Activated T-helper 2 cell treated with anti-CD3 and anti-CD28 coated beads, Interferon-gamma antibody, Interleukin-2, Interleukin-4, amounts not matched to agents 10 μg/mL and 5 μg/mL and 100 μg/mL, durations not matched to agents 14 hours and 24 hours and 36 hours (primary cell): ENCODE measurements at regions of chr3 and their contacts with region 1.

Region 1: DNA sequence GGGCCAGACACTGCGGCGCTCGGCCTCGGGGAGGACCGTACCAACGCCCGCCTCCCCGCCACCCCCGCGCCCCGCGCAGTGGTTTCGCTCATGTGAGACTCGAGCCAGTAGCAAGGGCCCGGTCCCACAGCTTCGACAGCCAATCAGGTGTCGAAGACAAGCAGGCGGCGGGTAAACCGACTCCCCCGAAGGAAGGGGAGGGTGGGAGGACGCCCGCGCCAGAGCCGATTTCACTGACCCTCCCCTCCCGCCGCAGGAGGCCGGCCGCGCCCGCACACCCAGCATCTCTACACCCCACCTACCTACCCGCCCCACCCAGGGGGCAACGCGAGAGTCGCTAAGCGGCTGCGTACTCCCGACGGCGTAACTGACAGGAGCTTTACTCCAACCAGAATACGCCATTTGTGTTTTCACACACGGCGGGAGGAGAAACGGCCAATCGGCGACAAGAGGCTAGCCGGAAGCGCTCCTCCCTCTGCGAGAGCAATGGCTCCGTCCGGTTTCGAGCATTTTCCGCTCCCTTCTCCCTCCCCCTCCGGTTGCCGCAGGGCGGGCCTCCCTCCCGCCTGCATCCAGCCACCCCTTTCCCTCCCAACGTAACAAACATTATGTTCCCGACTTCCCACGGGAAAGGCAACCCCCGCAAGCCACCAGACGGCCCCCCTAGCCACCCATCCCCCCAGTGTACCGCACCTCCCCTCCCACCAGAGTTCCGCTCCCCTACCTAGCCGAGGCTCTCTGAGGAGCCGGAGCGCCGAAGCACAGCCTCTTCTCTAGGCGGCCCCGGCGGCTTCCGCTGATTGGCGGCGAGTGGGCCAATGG is 504 bp upstream of the SETD5 start:
- DNase-seq: peak; percentile 99
- H3K4me3 Mint-ChIP-seq: peak overlapping the region; percentile 96
- H3K27ac Mint-ChIP-seq: peak overlapping the region; percentile 99
- H3K4me1 Mint-ChIP-seq: peaks cover 56% of the 10 kb centered on the region
- H3K27me3 Mint-ChIP-seq: no peaks in the 10 kb centered on the region

Region 2: GRCh38 chr3:9276761-9277370 is 120.0 kb before region 1 on chr3:
- intact Hi-C with region 1: no loop called
- DNase-seq: no peak
- H3K4me3 Mint-ChIP-seq: no peak overlapping the region
- H3K27ac Mint-ChIP-seq: no peak overlapping the region
- H3K4me1 Mint-ChIP-seq: no peaks in the 10 kb centered on the region
- H3K27me3 Mint-ChIP-seq: peaks cover 4% of the 10 kb centered on the region

Region 3: GRCh38 chr3:9362731-9363530 is 34.0 kb before region 1 on chr3 and contains the start of gene THUMPD3:
- intact Hi-C with region 1: loop called (anchors 1 kb)
- DNase-seq: peak; percentile 89
- H3K4me3 Mint-ChIP-seq: peak within 1 kb of the TSS; percentile 98
- H3K27ac Mint-ChIP-seq: peak within 1 kb of the TSS; percentile 99
- H3K4me1 Mint-ChIP-seq: peaks cover 19% of the 10 kb centered on the region
- H3K27me3 Mint-ChIP-seq: no peaks in the 10 kb centered on the region
- total RNA-seq, gene THUMPD3: 56.5 and 57.7 TPM in 2 replicates

Region 4: GRCh38 chr3:9439331-9439730 is 42.4 kb after region 1 on chr3:
- intact Hi-C with region 1: no loop called
- DNase-seq: no peak
- H3K4me3 Mint-ChIP-seq: no peak overlapping the region
- H3K27ac Mint-ChIP-seq: no peak overlapping the region
- H3K4me1 Mint-ChIP-seq: peaks cover 5% of the 10 kb centered on the region
- H3K27me3 Mint-ChIP-seq: no peaks in the 10 kb centered on the region

Region 5: GRCh38 chr3:9452417-9452816 is 55.5 kb after region 1 on chr3:
- intact Hi-C with region 1: loop called (anchors 2 kb)
- DNase-seq: no peak
- H3K4me3 Mint-ChIP-seq: peak overlapping the region; percentile 11
- H3K27ac Mint-ChIP-seq: peak overlapping the region; percentile 75
- H3K4me1 Mint-ChIP-seq: peaks cover 33% of the 10 kb centered on the region
- H3K27me3 Mint-ChIP-seq: no peaks in the 10 kb centered on the region

Region 6: DNA sequence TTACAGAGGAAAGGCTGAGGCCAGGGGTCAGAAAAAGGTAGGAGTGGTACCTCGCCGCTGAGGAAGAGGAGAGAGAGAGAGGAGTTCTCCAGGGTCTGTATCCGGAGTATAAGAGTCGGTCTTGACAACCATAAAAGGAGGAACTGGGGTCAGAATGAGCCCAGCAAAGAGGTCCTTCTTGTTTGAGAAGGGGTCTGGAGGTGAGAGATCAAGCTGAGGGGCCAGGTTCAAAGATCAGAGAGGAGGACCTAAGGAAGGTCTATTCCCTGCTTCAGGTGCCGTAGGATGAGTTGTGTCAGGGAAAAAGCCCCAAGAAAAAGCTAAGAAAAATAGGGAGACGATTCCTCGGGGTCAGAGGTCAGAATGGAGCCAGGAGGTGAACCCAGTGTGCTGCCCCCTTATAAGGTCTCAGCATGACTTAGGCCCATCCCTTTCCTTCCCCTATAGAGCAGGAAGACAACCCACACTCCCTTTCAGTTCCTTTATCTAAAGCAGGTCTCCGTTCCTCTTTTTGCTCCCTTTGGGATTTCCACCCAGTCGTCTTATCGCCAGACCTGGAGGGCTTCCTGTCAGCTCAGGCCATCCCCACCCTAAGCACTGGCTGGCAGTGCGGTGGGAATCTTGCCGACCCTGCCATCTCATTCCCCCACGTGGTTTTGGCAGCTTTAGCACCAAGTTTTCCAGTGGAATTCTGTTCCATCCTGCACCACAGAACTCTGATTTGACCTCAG is 253.0 kb after region 1 on chr3:
- intact Hi-C with region 1: loop called (anchors 1 kb)
- DNase-seq: no peak
- H3K4me3 Mint-ChIP-seq: peak overlapping the region; percentile 93
- H3K27ac Mint-ChIP-seq: peak overlapping the region; percentile 84
- H3K4me1 Mint-ChIP-seq: peaks cover 11% of the 10 kb centered on the region
- H3K27me3 Mint-ChIP-seq: no peaks in the 10 kb centered on the region

Region 7: GRCh38 chr3:9749645-9750555 is 353.0 kb after region 1 on chr3 and contains the start of gene OGG1:
- intact Hi-C with region 1: loop called (anchors 1 kb)
- DNase-seq: peak; percentile 97
- H3K4me3 Mint-ChIP-seq: peak within 1 kb of the TSS; percentile 95
- H3K27ac Mint-ChIP-seq: peak within 1 kb of the TSS; percentile 94
- H3K4me1 Mint-ChIP-seq: peaks cover 28% of the 10 kb centered on the region
- H3K27me3 Mint-ChIP-seq: no peaks in the 10 kb centered on the region
- total RNA-seq, gene OGG1: 33.0 and 38.4 TPM in 2 replicates

Region 8: GRCh38 chr3:9890249-9891071 is 493.5 kb after region 1 on chr3 and contains the start of gene JAGN1:
- intact Hi-C with region 1: loop called (anchors 5 kb)
- DNase-seq: peak; percentile 83
- H3K4me3 Mint-ChIP-seq: peak within 1 kb of the TSS; percentile 97
- H3K27ac Mint-ChIP-seq: peak within 1 kb of the TSS; percentile 99
- H3K4me1 Mint-ChIP-seq: peaks cover 31% of the 10 kb centered on the region
- H3K27me3 Mint-ChIP-seq: no peaks in the 10 kb centered on the region
- total RNA-seq, gene JAGN1: 31.7 and 33.3 TPM in 2 replicates